Adrenal gland (tissue), 19 donors: ENCODE measurements at regions of chr18 and their contacts with region 1.

Region 1: DNA sequence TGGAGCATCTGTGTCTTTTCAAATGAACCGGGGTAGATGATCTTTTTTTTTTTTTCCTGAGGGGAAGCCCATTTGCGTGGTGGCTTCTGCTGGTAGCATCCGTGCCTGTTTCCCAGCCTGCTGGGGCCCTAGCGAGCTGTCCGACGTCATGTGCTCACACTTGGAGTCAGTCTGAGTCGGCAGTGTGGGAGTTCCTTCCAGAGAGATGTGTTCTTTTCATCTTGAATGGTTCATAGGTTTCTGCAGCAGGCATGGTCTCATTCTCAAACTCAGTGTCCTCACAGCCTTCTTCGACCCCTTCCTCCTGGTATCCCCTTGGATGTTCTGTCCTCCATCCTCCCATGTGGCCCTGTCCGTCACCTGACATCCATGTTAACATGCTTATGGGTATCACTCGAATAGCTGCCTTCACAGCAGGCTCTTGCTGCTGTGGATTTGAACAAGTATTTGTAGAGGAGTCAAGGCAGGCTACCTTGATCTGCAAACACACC is 51.0 kb downstream of the LDLRAD4 start:
- DNase-seq: peak in 4 of 7 donors; percentile 38 to 66 (median 42)
- H3K4me3 ChIP-seq: no peak overlapping the region
- H3K27ac ChIP-seq: peak overlapping the region in 4 of 5 donors; percentile 63 to 73 (median 65)
- H3K4me1 ChIP-seq: peaks cover 40 to 85% of the 10 kb centered on the region in 2 donors
- H3K27me3 ChIP-seq: no peaks in the 10 kb centered on the region
- CTCF ChIP-seq: no peak
- POLR2A ChIP-seq: no peak

Region 2: GRCh38 chr18:13026583-13027270 is 242.8 kb before region 1 on chr18:
- intact Hi-C with region 1: no loop called
- DNase-seq: no peak
- H3K4me3 ChIP-seq: no peak overlapping the region
- H3K27ac ChIP-seq: no peak overlapping the region
- H3K4me1 ChIP-seq: no peaks in the 10 kb centered on the region
- H3K27me3 ChIP-seq: no peaks in the 10 kb centered on the region
- CTCF ChIP-seq: no peak
- POLR2A ChIP-seq: no peak

Region 3: GRCh38 chr18:13076886-13077285 is 192.7 kb before region 1 on chr18:
- intact Hi-C with region 1: no loop called
- DNase-seq: peak in 1 of 7 donors; percentile 23
- H3K4me3 ChIP-seq: no peak overlapping the region
- H3K27ac ChIP-seq: no peak overlapping the region
- H3K4me1 ChIP-seq: no peaks in the 10 kb centered on the region
- H3K27me3 ChIP-seq: no peaks in the 10 kb centered on the region
- CTCF ChIP-seq: no peak
- POLR2A ChIP-seq: no peak

Region 4: DNA sequence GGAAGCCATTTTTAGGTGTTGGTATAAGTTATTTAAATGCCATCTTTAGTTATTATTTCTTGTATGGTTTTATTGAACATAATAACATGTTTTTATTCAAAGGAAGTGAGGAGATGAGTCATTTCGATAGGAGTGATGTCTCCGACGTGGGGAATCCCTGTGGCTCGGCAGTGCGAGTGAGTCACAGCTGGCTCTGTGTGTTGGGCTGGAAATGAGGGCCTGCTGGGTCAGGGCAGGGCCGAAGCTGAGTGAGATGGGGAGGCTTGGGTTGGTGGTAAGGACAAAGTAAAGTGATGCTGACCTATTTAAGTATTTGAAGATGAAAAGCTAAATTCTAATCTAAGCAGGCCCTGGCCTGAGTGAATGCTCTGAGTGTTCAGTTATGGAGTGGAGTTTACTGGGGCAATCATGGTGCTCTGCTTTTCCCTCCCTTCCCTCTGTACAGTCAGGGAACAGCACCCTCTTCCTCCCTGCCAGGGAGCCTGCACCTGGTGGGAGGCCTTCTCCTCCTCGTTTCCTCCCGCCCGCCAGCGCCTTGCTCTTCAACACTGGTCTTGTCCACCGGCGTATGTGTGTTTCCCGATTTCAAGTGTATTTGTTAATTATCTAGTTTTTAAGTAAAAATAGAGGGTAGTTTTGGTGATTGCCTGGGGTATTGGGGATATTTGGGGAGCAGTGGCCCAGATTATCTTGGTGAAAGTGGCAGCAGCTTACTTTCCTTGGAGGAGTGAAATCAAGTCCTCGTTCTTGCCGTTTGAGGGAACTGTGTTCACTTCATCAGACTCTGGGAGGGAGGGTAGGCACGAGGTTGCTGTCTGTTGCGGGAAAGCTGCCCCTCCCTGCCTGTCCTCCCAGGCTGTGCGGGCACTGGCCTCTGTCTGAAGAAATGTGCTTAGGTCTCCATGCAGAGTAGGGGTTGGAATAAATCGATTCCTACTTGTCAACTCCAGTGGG is 106.0 kb after region 1 on chr18:
- intact Hi-C with region 1: loop called in 1 of 2 experiments (anchors 10 kb)
- DNase-seq: peak; percentile 81 to 94 (median 90)
- H3K4me3 ChIP-seq: no peak overlapping the region
- H3K27ac ChIP-seq: peak overlapping the region in 4 of 5 donors; percentile 20 to 77 (median 50)
- H3K4me1 ChIP-seq: peaks cover 0 to 32% of the 10 kb centered on the region in 2 donors
- H3K27me3 ChIP-seq: no peaks in the 10 kb centered on the region
- CTCF ChIP-seq: no peak
- POLR2A ChIP-seq: no peak